ENCODE measurements at regions of chr2 and their contacts with region 1.

Region 1: DNA sequence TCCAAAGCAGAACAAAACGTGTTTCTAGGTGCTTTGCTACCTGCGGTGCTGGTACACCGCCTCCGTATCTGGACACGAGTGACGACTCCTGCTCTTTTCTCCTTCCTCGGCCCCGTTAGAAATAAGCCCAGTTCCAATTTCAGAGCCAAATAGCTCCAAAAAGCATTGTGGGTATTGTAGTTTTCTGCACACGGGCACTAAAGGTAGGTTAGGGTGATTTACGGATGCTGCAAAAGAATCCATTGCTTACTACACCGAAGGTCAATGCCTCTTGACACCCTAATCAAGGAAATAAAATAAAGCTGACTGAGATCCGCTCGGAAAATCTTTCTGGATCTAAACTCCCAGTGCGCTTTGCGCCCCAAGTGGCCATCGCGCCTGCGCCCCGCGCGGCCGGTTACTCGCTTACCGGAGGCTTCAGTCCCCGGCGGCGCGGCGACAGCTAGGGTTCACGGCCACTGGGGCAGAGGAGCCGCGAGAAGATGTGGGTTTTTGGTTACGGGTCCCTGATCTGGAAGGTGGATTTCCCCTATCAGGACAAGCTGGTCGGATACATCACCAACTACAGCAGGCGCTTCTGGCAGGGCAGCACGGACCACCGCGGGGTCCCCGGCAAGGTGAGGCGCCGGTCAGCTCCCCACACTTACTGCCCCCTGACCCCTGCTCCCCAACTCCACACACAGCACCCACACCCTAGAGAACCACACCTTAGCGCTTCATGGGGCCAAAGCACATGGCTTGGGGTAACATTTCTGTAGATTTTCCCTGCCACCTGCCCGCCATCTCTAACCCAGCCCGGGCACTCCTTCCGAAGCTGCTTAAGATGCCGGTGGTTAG is at the start of gene CHAC2:
- DNase-seq: peak; percentile 91
- H3K4me3 ChIP-seq: peak within 1 kb of the TSS; percentile 84
- H3K27ac ChIP-seq: peak within 1 kb of the TSS; percentile 88
- H3K4me1 ChIP-seq: peaks cover 30% of the 10 kb centered on the region
- CTCF ChIP-seq: peak; percentile 43; the same call in 1 of the 2 replicates
- total RNA-seq, gene CHAC2: 15.9 and 17.0 TPM in 2 replicates

Region 2: DNA sequence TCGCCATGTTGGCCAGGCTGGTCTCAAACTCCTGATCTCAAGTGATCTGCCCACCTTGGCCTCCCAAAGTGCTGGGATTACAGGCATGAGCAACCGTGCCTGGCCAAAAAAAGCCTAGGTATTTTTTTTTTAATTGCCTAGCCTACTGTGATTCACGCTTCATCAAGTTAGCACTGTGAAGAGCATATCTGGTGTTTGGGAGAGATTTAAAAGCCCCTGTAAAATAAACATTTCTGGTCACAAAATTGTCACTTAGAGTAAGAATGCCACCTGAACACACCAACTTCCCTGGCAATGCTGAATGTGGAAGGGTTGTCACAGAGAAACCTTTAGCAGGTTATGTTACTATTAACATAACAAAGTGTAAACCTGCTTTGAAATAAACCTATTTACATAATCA is 39.7 kb before region 1 on chr2:
- CTCF ChIA-PET with region 1: no interaction called
- POLR2A ChIA-PET with region 1: no interaction called
- intact Hi-C with region 1: no loop called
- DNase-seq: no peak
- H3K4me3 ChIP-seq: no peak overlapping the region
- H3K27ac ChIP-seq: no peak overlapping the region
- H3K4me1 ChIP-seq: no peaks in the 10 kb centered on the region
- CTCF ChIP-seq: no peak

Region 3: DNA sequence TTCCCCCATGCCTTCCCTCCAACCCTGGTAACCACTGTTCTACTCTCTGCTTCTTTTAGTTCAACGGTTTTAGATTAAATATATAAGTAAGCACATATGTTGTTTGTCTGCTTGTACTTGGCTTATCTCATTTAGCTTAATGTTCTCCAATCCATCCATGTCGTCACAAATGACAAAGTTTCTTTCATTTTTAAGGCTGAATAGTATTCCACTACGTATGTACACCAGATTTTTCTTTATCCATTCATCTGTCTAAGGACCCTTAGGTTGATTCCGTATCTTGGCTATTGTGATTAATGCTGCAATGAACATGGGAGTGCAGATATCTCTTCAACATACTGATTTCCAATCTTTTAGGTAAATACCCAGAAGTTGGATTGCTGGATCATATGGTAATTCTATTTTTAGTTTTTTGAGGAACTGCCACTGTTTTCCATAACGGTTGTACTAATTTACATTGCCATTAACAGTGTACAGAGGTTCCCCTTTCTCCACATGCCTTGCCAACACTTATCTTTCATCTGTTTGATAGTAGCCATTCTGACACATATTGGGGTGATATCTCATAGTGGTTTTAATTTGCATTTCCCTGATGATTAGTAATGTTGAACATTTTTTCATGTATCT is 11.0 kb after region 1 on chr2:
- CTCF ChIA-PET with region 1: interaction called, 3 read pairs
- POLR2A ChIA-PET with region 1: interaction called, 27 read pairs
- intact Hi-C with region 1: no loop called
- DNase-seq: no peak
- H3K4me3 ChIP-seq: no peak overlapping the region
- H3K27ac ChIP-seq: no peak overlapping the region
- H3K4me1 ChIP-seq: peaks cover 6% of the 10 kb centered on the region
- CTCF ChIP-seq: no peak

Region 4: DNA sequence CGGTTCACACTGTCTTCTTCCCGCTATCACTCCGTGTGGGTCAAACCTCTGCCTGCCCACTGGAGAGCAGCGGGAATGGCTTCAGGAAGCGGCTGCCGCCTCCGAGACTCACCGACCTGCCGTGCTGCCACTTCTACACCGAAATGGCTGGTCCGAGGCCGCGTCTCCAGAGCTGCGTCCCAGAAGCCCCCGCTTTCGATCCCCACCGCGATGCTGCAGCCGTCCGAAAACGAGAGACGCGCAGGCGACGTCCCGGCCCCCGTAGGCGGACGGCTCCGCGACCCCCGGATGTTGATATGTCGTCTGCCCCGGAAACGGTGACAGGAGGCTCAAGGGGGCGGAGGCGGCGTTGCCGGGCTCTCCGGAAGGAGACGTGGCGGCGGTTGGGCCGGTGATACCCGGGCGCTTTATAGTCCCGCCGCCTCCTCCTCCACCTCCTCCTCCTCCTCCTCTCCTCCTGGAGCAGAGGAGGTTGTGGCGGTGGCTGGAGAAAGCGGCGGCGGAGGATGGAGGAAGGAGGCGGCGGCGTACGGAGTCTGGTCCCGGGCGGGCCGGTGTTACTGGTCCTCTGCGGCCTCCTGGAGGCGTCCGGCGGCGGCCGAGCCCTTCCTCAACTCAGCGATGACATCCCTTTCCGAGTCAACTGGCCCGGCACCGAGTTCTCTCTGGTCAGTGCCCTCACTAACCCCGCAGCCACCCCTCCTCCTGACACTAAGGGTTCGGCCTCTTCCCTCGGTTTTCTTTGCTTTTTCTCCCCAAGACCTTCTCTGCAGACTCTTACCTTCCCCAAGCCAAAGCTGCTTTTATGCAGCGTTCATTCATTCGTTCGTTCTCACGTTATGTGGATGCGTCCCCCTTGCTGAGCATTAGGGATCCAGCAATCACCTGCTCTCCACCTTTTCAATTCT is 19.3 kb after region 1 on chr2 and contains the starts of genes ASB3 and ERLEC1:
- CTCF ChIA-PET with region 1: interaction called, 3 read pairs
- POLR2A ChIA-PET with region 1: interaction called, 29 read pairs
- intact Hi-C with region 1: loop called (anchors 1 kb)
- DNase-seq: peak; percentile 93
- H3K4me3 ChIP-seq: peak within 1 kb of the TSS; percentile 94
- H3K27ac ChIP-seq: peak within 1 kb of the TSS; percentile 75
- H3K4me1 ChIP-seq: peaks cover 38% of the 10 kb centered on the region
- CTCF ChIP-seq: no peak
- total RNA-seq, gene ASB3: 25.0 and 26.4 TPM in 2 replicates
- total RNA-seq, gene ERLEC1: 22.7 and 26.9 TPM in 2 replicates